AG04449 (cell line): ENCODE measurements at regions of chr1 and their contacts with region 1.

Region 1: DNA sequence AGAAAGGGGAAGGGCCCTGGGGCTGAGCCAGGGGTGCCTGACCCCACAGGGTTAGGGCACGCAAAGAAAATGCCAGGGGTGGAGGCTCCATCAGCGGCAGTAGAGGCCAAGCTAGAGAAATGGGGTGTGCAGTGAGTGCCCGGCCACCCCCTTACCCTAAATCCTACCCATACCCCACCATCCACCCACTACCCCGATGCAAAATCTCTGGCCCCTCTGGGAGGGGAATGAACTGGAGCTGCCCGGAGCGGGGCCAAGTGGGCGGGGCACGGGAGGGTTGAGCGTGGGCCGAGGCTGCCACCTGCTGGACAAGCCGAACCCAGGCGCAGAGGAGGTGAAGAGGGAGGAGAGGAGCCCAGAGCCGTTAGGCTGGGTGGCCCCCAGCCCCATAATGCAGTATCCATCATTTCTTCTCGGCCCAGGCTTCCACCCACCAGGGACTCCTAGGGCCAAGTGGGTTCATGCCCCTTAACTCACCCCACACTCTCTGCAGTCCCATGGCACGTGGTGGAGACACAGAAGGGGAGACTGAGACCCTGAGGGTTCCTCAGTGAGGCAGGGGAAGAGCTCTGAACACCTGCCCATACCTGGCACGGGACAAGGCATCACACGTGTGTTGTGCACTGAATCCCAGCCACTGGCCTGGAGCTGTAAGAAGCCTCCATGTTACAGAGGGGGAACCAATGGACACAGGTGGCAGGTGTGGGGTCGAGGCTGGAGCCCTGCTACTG is 1.4 kb upstream of the C1QC start:
- DNase-seq: no peak
- H3K4me3 ChIP-seq: no peak overlapping the region
- CTCF ChIP-seq: peak; percentile 93

Region 2: DNA sequence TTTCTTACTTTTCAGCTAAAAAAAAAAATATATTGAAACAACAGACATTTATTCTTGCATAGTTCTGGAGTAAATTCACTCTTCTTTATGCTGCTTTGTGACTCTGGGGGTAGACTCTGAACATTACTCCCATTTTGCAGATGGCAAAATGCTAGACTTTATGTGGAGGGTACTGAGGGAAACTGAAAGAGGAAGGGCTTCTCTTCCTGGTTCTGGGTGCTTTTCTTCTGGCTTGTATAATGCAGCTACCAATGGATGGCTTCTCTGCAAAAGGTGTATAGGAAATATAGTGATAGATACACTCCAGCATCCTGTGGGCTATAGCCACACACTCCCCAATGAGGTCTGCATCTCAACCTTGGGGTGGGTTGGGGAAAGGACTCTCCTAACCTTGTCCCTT is 210.1 kb before region 1 on chr1:
- CTCF ChIA-PET with region 1: interaction called, 48 read pairs
- POLR2A ChIA-PET with region 1: no interaction called
- DNase-seq: no peak
- H3K4me3 ChIP-seq: no peak overlapping the region
- CTCF ChIP-seq: no peak

Region 3: DNA sequence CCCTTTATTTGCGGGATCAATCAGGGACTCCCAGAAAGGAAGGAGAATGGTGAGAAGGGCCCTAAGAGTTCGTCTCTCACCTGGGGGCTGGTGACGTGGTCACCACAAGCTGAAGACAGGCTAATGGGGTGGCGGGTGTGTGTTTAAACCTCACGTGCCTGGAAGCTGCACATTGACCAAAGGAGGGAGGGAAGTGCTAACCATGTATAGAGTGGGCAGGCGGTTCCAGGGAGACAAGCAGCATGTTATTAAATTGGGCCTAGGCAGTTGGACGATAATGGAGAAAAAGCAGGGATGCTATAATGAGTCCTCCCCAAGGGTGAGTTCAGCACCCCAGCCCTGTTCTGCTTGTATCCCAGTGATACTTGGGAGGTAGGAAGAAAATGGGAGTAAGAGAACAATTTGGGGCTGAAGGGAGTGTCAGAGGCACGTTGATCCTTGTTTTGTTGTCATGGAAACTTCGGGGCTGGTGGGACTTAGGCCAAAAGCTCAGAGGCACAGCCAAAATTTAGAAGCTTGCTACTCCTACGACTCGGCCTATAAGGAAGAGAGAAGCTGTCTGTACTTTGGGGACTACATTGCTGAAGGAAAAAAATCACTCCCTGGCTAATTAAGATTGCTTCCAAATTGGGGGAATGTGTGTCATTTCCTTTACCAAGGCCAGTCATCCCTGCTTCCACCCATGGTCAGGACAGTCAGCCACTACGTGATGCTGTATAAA is 112.0 kb before region 1 on chr1:
- CTCF ChIA-PET with region 1: interaction called, 17 read pairs
- POLR2A ChIA-PET with region 1: no interaction called
- DNase-seq: no peak
- H3K4me3 ChIP-seq: no peak overlapping the region
- CTCF ChIP-seq: no peak

Region 4: DNA sequence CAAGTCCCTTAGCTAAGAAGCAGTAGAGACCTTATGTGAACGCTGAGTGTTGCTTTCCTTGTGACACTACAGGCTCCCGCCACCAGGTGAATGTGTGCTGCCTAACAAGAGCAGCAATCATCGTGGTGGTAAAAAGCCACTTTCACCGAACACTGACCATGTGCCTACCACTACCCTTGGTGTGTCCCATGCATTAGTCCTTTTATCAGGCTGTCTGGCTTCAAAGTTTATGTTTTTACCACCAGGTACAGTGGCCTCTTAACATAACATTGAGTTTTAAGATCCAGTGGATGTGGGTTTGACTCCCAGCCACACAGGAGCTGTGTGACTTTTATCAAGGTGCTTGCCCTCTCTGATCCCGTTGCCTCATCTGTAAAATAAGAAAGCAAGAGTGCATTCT is 12.6 kb after region 1 on chr1:
- CTCF ChIA-PET with region 1: interaction called, 30 read pairs
- POLR2A ChIA-PET with region 1: no interaction called
- DNase-seq: no peak
- H3K4me3 ChIP-seq: no peak overlapping the region
- CTCF ChIP-seq: no peak